Activated CD8-positive, alpha-beta T cell treated with anti-CD3 and anti-CD28 coated beads, Interleukin-2, amount 10 ng/mL, durations not matched to agents 7 days and 5 days (primary cell): ENCODE measurements at regions of chr15 and their contacts with region 1.

Region 1: GRCh38 chr15:101193806-101194545 is 57.9 kb downstream of the CHSY1 start:
- DNase-seq: no peak
- ATAC-seq: no peak
- H3K4me3 Mint-ChIP-seq: peak overlapping the region; percentile 57
- H3K27ac Mint-ChIP-seq: peak overlapping the region; percentile 81
- H3K4me1 Mint-ChIP-seq: peaks cover 88% of the 10 kb centered on the region
- H3K27me3 Mint-ChIP-seq: no peaks in the 10 kb centered on the region

Region 2: GRCh38 chr15:101206176-101206591 is 12.2 kb after region 1 on chr15:
- CTCF ChIA-PET with region 1: interaction called, 13 read pairs
- POLR2A ChIA-PET with region 1: no interaction called
- DNase-seq: peak; percentile 72
- ATAC-seq: peak; percentile 84
- H3K4me3 Mint-ChIP-seq: peak overlapping the region; percentile 73
- H3K27ac Mint-ChIP-seq: peak overlapping the region; percentile 90
- H3K4me1 Mint-ChIP-seq: peaks cover 82% of the 10 kb centered on the region
- H3K27me3 Mint-ChIP-seq: no peaks in the 10 kb centered on the region